ENCODE measurements at regions of chr19 and their contacts with region 1.

Region 1: GRCh38 chr19:35495107-35496064 is 5.1 kb upstream of the KRTDAP start:
- DNase-seq: peak in 1 of 2 experiments; percentile 77
- H3K4me3 ChIP-seq: no peak overlapping the region
- H3K27ac ChIP-seq: no peak overlapping the region
- H3K4me1 ChIP-seq: peaks cover 0 to 5% (median 3%) of the 10 kb centered on the region in 4 experiments; a peak in 3 of 7 replicates
- H3K27me3 ChIP-seq: no peaks in the 10 kb centered on the region; a peak in 1 of 7 replicates
- CTCF ChIP-seq: peak; percentile 87 to 96 (median 90)
- EP300 ChIP-seq: no peak
- POLR2A ChIP-seq: no peak
- RAD21 ChIP-seq: peak; percentile 67 to 78

Region 2: DNA sequence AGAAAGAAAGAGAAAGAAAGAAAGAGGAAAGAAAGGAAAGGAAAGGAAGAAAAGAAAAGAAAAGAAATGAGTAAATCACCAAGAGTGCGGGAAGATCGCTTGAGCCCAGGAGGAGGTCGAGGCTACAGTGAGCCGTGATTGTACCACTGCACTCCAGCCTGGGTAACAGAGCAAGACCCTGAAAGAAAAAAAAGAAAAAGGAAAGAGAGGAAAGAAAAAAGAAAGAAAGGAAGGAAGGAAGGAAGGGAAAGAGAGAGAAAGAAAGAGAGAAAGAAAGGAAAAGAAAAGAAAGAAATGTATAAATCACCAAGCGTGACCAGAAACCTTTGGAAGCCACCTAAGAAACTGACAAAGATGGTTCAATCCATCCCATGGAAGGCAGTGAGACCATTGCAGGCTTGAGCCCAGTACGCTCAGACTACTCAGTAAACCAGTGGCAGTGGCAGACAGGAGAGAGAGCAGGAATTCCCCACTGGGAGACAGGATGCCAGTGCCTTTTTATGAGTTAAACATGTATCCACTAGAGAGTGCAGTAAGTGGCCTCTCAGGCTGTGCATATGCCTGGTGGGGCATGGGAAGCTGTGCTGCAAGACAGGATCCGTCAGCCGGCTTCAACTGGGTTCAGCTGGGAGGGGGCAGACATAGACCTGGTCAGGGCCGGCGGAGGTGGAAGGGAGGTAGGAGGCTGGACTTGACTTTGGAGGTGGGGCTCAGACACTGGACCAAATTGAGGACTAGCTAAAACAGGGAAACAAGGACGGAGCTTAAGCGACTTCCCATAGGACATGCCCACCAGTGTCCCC is 119.7 kb before region 1 on chr19:
- CTCF ChIA-PET with region 1: interaction called, 11 read pairs
- POLR2A ChIA-PET with region 1: interaction called, 3 read pairs
- DNase-seq: no peak
- H3K4me3 ChIP-seq: no peak overlapping the region
- H3K27ac ChIP-seq: no peak overlapping the region
- H3K4me1 ChIP-seq: no peaks in the 10 kb centered on the region
- H3K27me3 ChIP-seq: peaks cover 0 to 2% (median 0%) of the 10 kb centered on the region in 4 experiments; a peak in 1 of 7 replicates
- CTCF ChIP-seq: no peak
- EP300 ChIP-seq: no peak
- POLR2A ChIP-seq: no peak
- RAD21 ChIP-seq: no peak

Region 3: GRCh38 chr19:35468637-35469036 is 26.7 kb before region 1 on chr19:
- CTCF ChIA-PET with region 1: interaction called, 22 read pairs
- POLR2A ChIA-PET with region 1: interaction called, 5 read pairs
- DNase-seq: no peak
- H3K4me3 ChIP-seq: no peak overlapping the region
- H3K27ac ChIP-seq: no peak overlapping the region
- H3K4me1 ChIP-seq: no peaks in the 10 kb centered on the region
- H3K27me3 ChIP-seq: no peaks in the 10 kb centered on the region
- CTCF ChIP-seq: peak; percentile 83 to 84 (median 84)
- EP300 ChIP-seq: no peak
- POLR2A ChIP-seq: no peak
- RAD21 ChIP-seq: peak; percentile 80 to 88

Region 4: GRCh38 chr19:35484252-35485036 is 10.9 kb before region 1 on chr19:
- CTCF ChIA-PET with region 1: interaction called, 24 read pairs
- POLR2A ChIA-PET with region 1: interaction called, 8 read pairs
- DNase-seq: no peak
- H3K4me3 ChIP-seq: no peak overlapping the region
- H3K27ac ChIP-seq: no peak overlapping the region
- H3K4me1 ChIP-seq: no peaks in the 10 kb centered on the region
- H3K27me3 ChIP-seq: no peaks in the 10 kb centered on the region; a peak in 1 of 7 replicates
- CTCF ChIP-seq: no peak
- EP300 ChIP-seq: no peak
- POLR2A ChIP-seq: no peak
- RAD21 ChIP-seq: no peak

Region 5: DNA sequence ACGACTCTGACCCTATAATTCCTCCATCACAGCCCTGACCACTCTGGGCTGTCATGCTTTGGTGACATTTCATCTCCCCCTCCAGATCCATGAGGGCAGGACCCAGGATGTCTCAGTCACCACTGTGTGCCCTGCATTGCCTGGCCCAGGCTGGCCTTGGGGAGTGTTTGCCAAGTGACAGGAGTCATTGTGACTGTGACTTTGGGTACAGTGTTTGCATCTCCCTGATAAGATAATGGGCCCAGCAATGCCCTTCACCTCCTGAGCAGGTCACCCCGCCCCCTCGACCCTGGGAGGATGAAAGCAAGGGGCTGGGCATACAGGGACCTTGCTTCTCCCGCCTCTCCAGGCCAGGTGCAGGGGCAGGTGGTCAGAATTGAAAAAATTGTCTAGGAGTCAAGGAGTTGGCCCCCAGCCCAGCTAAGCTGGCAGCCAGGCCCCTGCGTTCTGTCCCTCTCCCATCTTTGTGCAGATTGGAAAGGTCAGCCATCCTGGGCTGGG is 73.9 kb after region 1 on chr19:
- CTCF ChIA-PET with region 1: no interaction called
- POLR2A ChIA-PET with region 1: no interaction called
- DNase-seq: no peak
- H3K4me3 ChIP-seq: no peak overlapping the region
- H3K27ac ChIP-seq: no peak overlapping the region
- H3K4me1 ChIP-seq: peaks cover 0 to 4% (median 0%) of the 10 kb centered on the region in 4 experiments; a peak in 1 of 7 replicates
- H3K27me3 ChIP-seq: no peaks in the 10 kb centered on the region; a peak in 1 of 7 replicates
- CTCF ChIP-seq: no peak
- EP300 ChIP-seq: no peak
- POLR2A ChIP-seq: no peak
- RAD21 ChIP-seq: no peak

Region 6: DNA sequence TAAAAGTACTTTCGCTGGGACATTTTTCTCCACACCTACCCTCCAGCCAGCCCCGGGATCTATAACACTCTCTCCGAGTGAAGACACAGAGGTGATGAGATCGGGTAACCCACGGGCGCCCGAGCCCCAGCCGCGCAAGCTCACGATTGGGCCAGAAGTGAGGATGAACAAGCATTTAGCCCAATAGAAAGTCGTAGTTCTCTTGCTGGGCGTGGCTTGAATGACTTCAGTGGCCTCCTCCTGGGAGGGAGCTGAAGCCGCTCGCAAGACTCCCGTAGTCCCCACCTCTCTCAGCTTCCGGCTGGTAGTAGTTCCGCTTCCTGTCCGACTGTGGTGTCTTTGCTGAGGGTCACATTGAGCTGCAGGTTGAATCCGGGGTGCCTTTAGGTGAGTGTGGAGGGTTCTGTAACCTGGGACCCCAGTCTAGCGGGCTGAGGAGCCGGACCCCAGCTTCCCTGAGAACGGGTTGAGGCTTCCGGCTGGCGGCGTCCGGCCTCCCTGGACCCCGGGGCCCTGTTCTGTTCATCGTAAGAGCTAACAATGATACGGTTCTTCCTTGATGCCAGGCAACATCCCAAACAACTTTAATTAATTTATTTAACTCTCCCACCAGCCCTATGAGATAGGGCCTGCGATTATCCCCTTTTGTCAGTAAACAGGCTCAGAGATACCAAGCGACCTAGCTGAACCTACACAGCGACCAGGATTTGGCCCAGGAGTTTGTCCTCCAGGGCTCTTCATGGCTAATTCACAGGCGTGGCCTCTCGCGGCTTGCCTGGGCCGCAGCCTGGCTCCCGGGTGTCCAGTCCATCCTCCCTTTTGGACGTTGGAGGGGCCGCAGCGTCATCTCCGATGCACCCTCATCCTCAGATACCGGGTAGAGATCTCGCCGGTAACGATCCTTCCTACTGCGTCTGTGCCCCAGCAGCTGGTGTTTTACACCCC is 152.9 kb after region 1 on chr19 and contains the start of gene COX6B1:
- CTCF ChIA-PET with region 1: no interaction called
- POLR2A ChIA-PET with region 1: no interaction called
- DNase-seq: peak; percentile 84 to 88
- H3K4me3 ChIP-seq: peak within 1 kb of the TSS; percentile 62 to 98 (median 92)
- H3K27ac ChIP-seq: peak within 1 kb of the TSS; percentile 44; the same call in 1 of the 2 replicates
- H3K4me1 ChIP-seq: peaks cover 2 to 11% (median 4%) of the 10 kb centered on the region in 4 experiments; a peak in 5 of 7 replicates
- H3K27me3 ChIP-seq: no peaks in the 10 kb centered on the region; a peak in 3 of 7 replicates
- CTCF ChIP-seq: no peak
- EP300 ChIP-seq: no peak
- POLR2A ChIP-seq: peak; percentile 49 to 83
- RAD21 ChIP-seq: no peak
- total RNA-seq, gene COX6B1: 436 and 437 TPM in 2 replicates